ENCODE measurements at regions of chr9 and their contacts with region 1.

Region 1: GRCh38 chr9:120424248-120424647 is 155.7 kb downstream of the CDK5RAP2 start:
- DNase-seq: no peak
- H3K4me3 ChIP-seq: no peak overlapping the region
- CTCF ChIP-seq: no peak

Region 2: GRCh38 chr9:120369608-120370220 is 54.5 kb before region 1 on chr9:
- CTCF ChIA-PET with region 1: no interaction called
- POLR2A ChIA-PET with region 1: no interaction called
- DNase-seq: no peak
- H3K4me3 ChIP-seq: no peak overlapping the region
- CTCF ChIP-seq: no peak

Region 3: GRCh38 chr9:120438836-120439546 is 14.7 kb after region 1 on chr9:
- CTCF ChIA-PET with region 1: interaction called, 10 read pairs
- POLR2A ChIA-PET with region 1: interaction called, 3 read pairs
- DNase-seq: no peak
- H3K4me3 ChIP-seq: no peak overlapping the region
- CTCF ChIP-seq: peak; percentile 64